Caco-2 (cell line): ENCODE measurements at regions of chr10 and their contacts with region 1.

Region 1: GRCh38 chr10:62437696-62438095 is 63.5 kb downstream of the ZNF365 start:
- DNase-seq: peak in 1 of 2 experiments; percentile 79
- H3K4me3 ChIP-seq: no peak overlapping the region
- H3K4me3 Mint-ChIP-seq: no peak overlapping the region
- H3K27ac Mint-ChIP-seq: no peak overlapping the region
- H3K4me1 ChIP-seq: no peaks in the 10 kb centered on the region
- H3K4me1 Mint-ChIP-seq: no peaks in the 10 kb centered on the region
- H3K27me3 ChIP-seq: no peaks in the 10 kb centered on the region
- H3K27me3 Mint-ChIP-seq: peaks cover 21% of the 10 kb centered on the region
- CTCF ChIP-seq: peak; percentile 85

Region 2: GRCh38 chr10:62268399-62269114 is 169.1 kb before region 1 on chr10 and contains the start of gene RTKN2:
- CTCF ChIA-PET with region 1: no interaction called
- POLR2A ChIA-PET with region 1: no interaction called
- intact Hi-C with region 1: loop called (anchors 5 kb)
- DNase-seq: peak; percentile 99 to 100
- H3K4me3 ChIP-seq: peak within 1 kb of the TSS; percentile 66
- H3K4me3 Mint-ChIP-seq: peak within 1 kb of the TSS; percentile 78
- H3K27ac Mint-ChIP-seq: peak within 1 kb of the TSS; percentile 61
- H3K4me1 ChIP-seq: peaks cover 23% of the 10 kb centered on the region
- H3K4me1 Mint-ChIP-seq: peaks cover 26% of the 10 kb centered on the region
- H3K27me3 ChIP-seq: no peaks in the 10 kb centered on the region
- H3K27me3 Mint-ChIP-seq: peaks cover 7% of the 10 kb centered on the region
- CTCF ChIP-seq: no peak
- total RNA-seq, gene RTKN2: 36.2 and 37.1 TPM in 2 replicates

Region 3: DNA sequence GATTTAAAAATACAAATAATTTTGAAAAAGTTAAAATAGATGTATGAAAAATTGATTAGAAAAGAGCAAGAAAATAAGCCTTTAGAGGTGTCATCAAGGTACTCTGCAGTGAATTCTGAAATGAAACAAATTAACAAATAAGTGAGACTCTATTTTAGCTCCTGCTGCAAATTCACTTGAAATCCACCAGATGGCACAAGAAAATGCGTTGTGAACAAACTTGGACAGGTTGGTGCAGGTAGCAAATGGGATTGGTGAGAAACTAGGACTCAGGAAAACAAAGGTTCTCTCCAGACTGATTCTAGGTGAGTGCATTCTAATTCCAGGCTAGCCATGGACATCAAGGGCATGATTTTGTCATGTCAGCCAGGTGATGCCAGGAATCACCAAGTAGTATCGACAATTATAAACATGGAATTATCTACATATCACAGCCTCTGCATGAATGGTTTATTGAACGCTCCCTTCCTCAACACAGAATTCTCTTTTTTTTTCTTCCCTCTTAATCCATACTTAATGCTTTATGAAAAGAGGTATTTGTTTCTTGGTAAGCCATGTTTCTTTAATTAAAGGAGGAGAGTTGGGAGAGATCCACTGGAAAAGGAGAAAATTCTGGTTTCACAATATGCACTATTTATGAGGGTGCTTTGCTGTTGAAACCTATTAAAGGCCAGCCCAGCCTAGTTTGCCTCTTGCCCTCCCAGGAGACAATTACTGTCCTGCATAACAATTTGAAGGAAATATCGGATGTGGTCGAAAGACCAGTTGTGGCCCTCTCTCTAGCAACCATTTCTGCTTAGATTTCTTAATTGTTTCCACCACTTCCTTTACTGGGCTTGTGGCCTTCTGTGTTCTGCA is 54.5 kb after region 1 on chr10:
- CTCF ChIA-PET with region 1: interaction called, 3 read pairs
- POLR2A ChIA-PET with region 1: no interaction called
- intact Hi-C with region 1: loop called (anchors 1 kb)
- DNase-seq: peak in 1 of 2 experiments; percentile 36
- H3K4me3 ChIP-seq: no peak overlapping the region
- H3K4me3 Mint-ChIP-seq: no peak overlapping the region
- H3K27ac Mint-ChIP-seq: no peak overlapping the region
- H3K4me1 ChIP-seq: no peaks in the 10 kb centered on the region
- H3K4me1 Mint-ChIP-seq: no peaks in the 10 kb centered on the region
- H3K27me3 ChIP-seq: 0 out of 2 replicates have a peak, but pooled peaks cover 1% of the 10 kb centered on the region
- H3K27me3 Mint-ChIP-seq: peaks cover 19% of the 10 kb centered on the region
- CTCF ChIP-seq: peak; percentile 79 to 83

Region 4: DNA sequence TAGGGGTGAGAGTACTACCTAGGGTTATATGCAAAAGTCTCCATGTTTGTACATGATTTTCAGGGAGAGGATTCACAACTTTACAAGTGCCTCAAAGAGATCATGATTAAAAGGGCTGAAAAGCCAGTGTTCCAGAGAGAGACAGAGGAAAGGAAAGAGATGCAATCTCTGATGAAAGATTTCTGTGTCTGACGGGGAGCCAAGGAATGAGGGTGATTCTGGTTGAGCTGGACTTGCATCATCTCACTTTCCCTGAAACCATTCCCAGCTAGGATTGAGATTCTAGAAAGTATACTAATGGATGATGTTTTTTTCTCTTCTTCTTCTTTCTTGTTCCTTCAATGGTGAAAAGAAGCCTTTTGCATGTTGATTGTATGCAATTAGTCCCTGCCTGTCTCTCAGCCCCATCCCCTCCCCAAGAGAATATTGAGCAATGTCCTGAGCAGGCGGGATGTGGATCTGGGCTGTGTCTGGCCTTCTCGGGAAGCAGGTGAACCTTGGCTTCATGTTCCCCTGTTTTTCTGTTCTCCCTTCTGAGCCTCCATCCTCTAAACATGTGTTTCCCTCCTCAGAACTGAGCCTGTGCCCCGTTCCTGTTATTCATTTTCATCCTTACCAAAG is 122.6 kb after region 1 on chr10:
- CTCF ChIA-PET with region 1: no interaction called
- POLR2A ChIA-PET with region 1: no interaction called
- intact Hi-C with region 1: loop called (anchors 10 kb)
- DNase-seq: no peak
- H3K4me3 ChIP-seq: no peak overlapping the region
- H3K4me3 Mint-ChIP-seq: no peak overlapping the region
- H3K27ac Mint-ChIP-seq: no peak overlapping the region
- H3K4me1 ChIP-seq: no peaks in the 10 kb centered on the region; the same call in 1 of the 2 replicates
- H3K4me1 Mint-ChIP-seq: no peaks in the 10 kb centered on the region
- H3K27me3 ChIP-seq: 0 out of 2 replicates have a peak, but pooled peaks cover 1% of the 10 kb centered on the region
- H3K27me3 Mint-ChIP-seq: peaks cover 15% of the 10 kb centered on the region
- CTCF ChIP-seq: no peak

Region 5: DNA sequence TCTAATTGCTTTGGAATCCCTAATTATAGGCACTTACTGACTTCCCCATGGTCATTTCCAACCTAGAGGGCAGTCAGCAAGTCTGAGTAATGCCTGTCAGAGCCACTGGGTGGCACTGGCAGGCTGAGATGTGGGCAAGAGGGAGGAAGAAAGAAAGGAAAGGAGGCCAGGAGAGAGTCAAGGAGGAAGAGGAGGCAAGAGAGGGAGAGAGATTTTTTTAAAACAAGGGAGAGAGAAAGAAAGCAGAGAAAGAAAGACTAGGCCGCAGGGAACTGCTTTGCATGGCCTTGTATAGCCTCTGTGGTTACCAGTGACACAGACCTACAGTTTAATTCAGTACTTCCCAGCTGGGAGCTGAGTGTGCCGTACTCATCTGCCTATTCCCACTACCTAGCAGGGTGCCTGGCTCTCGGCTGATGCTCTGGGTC is 156.4 kb after region 1 on chr10:
- CTCF ChIA-PET with region 1: no interaction called
- POLR2A ChIA-PET with region 1: no interaction called
- intact Hi-C with region 1: loop called (anchors 2 kb)
- DNase-seq: peak; percentile 68 to 82
- H3K4me3 ChIP-seq: no peak overlapping the region
- H3K4me3 Mint-ChIP-seq: no peak overlapping the region
- H3K27ac Mint-ChIP-seq: no peak overlapping the region
- H3K4me1 ChIP-seq: no peaks in the 10 kb centered on the region
- H3K4me1 Mint-ChIP-seq: no peaks in the 10 kb centered on the region
- H3K27me3 ChIP-seq: no peaks in the 10 kb centered on the region
- H3K27me3 Mint-ChIP-seq: peaks cover 12% of the 10 kb centered on the region
- CTCF ChIP-seq: peak; percentile 99

Region 6: DNA sequence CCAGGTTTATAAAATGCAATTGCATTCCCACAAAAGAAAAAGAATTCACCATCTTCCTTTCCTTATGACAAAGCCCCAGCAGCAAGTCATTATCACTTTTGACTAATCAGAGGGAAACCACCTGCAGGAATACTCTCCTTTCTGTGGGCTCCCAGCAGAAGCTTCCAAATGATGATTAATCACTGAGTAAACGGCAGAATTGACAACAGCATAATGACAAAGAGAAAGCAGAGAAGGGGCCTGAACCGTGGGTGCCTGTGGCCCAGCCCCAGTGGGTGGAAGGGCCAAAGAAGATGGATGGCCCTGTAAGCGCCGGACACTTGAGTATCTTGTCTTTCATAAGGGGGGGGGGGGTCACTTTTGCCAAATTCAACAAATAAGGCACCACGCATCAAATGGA is 543.0 kb after region 1 on chr10:
- CTCF ChIA-PET with region 1: no interaction called
- POLR2A ChIA-PET with region 1: no interaction called
- intact Hi-C with region 1: no loop called
- DNase-seq: no peak
- H3K4me3 ChIP-seq: no peak overlapping the region
- H3K4me3 Mint-ChIP-seq: no peak overlapping the region
- H3K27ac Mint-ChIP-seq: no peak overlapping the region
- H3K4me1 ChIP-seq: no peaks in the 10 kb centered on the region
- H3K4me1 Mint-ChIP-seq: peaks cover 7% of the 10 kb centered on the region
- H3K27me3 ChIP-seq: no peaks in the 10 kb centered on the region
- H3K27me3 Mint-ChIP-seq: peaks cover 3% of the 10 kb centered on the region
- CTCF ChIP-seq: no peak